Natural killer cell (primary cell): ENCODE measurements at regions of chr5 and their contacts with region 1.

Region 1: DNA sequence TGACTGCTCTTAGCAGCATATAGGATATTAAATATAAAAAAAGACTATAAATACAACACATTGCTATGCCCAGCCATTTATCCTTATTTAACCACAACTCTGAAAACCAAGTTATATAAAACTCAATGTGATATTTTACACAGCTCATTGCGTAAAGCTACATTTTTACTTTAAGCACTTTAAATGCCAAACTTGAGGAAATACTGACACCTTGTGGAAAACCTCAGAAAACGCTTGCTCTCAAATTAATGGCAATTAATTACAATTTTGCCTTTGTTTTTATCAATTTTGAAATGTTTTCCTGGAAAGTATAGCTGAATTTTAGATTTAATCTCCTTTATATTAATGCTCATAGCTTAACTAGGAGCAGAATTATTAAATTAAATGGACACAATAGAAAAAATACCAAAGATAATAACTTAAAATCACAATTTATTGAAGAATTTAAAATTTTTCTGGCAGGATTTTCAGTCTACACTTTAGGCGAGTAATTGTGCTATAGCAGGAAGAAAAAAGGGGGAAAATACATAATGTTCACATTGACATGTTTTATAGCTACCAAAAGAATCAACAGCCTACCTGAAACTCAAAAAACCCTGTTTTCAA is 25.2 kb upstream of the PLAC8L1 start:
- DNase-seq: peak in 1 of 2 donors; percentile 40
- ATAC-seq: no peak
- H3K4me3 ChIP-seq: no peak overlapping the region
- H3K4me3 Mint-ChIP-seq: no peak overlapping the region
- H3K27ac ChIP-seq: no peak overlapping the region
- H3K27ac Mint-ChIP-seq: no peak overlapping the region
- H3K4me1 ChIP-seq: no peaks in the 10 kb centered on the region
- H3K4me1 Mint-ChIP-seq: no peaks in the 10 kb centered on the region
- H3K27me3 ChIP-seq: no peaks in the 10 kb centered on the region
- H3K27me3 Mint-ChIP-seq: no peaks in the 10 kb centered on the region
- CTCF ChIP-seq: peak; percentile 18

Region 2: DNA sequence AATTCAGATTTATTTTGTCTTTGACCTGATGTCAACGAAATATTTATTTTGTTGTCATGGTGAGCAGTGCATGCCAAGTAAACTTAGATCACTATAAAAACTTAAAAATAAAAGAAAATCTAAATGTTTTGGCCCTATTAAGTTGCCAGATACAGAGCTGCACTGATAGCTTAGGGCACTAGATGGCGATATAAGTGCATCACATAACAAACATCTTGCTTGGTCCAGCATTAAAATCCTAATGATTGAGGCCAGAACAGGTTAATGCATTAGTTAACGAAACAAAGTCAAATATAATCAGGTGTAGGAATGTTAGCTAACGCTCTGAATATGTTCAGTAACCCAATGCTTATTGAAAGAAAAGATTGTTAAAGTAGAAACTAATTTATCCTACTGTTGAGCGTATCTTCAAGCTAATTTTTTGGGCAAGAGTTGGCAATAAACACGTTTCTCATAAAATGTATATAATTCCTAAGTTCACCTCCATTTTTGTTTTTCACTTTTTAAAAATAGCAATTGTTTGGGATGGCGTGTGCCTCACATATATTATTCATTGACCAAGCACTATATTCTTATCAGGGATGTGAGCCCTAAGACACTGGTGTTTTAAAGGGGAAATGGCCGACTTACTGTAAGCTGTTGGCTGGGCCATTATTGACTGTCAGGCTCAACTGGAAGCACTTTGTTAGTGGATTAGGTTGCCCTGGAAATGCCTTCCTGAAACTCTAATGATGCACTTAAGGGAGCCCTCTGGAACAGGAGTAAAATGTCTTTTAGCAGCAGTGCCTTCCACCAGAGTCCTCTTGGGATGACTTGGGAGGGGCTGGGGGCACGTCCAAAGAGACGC is 1926.6 kb before region 1 on chr5:
- intact Hi-C with region 1: loop called (anchors 2 kb)
- DNase-seq: peak in 1 of 2 donors; percentile 76
- ATAC-seq: peak; percentile 67 to 79 (median 74)
- H3K4me3 ChIP-seq: no peak overlapping the region
- H3K4me3 Mint-ChIP-seq: no peak overlapping the region
- H3K27ac ChIP-seq: no peak overlapping the region
- H3K27ac Mint-ChIP-seq: no peak overlapping the region
- H3K4me1 ChIP-seq: no peaks in the 10 kb centered on the region
- H3K4me1 Mint-ChIP-seq: no peaks in the 10 kb centered on the region
- H3K27me3 ChIP-seq: peaks cover 21% of the 10 kb centered on the region
- H3K27me3 Mint-ChIP-seq: peaks cover 39 to 74% of the 10 kb centered on the region in 2 donors
- CTCF ChIP-seq: peak; percentile 91

Region 3: DNA sequence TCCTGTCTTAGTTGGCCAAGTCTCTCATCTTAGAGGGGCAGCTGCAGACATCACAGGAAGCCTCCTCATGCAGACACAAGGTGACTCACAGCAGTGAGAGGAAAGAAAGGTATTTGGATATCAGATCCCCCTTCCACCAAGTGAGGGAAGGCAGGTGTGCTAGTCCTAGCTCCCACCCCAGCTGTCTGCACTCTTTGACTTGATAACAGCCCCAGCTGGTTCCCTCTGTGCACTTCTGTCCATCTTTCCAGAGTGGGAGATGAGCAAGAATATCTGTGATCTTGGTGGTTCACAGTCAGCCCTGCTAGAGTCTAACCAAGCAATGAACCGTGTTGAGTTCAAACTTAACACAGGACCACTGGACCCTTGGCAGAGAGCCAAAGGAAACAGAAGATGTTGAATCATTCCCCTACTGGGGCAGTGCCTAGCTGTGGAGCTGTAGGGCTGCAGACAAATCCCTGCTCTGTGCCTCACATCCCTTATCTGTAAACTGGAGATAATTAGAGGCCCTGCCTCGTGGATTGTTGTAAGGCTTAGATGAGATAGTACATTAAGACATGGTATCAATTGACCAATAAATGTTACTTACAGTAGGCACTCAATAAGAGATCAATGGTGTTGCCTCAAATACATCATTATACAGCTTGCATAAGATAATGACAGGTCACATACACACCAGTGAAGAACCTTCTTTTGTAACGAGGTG is 155.0 kb before region 1 on chr5:
- intact Hi-C with region 1: no loop called
- DNase-seq: no peak
- ATAC-seq: no peak
- H3K4me3 ChIP-seq: no peak overlapping the region
- H3K4me3 Mint-ChIP-seq: no peak overlapping the region
- H3K27ac ChIP-seq: no peak overlapping the region
- H3K27ac Mint-ChIP-seq: no peak overlapping the region
- H3K4me1 ChIP-seq: no peaks in the 10 kb centered on the region
- H3K4me1 Mint-ChIP-seq: no peaks in the 10 kb centered on the region
- H3K27me3 ChIP-seq: no peaks in the 10 kb centered on the region
- H3K27me3 Mint-ChIP-seq: no peaks in the 10 kb centered on the region
- CTCF ChIP-seq: no peak

Region 4: DNA sequence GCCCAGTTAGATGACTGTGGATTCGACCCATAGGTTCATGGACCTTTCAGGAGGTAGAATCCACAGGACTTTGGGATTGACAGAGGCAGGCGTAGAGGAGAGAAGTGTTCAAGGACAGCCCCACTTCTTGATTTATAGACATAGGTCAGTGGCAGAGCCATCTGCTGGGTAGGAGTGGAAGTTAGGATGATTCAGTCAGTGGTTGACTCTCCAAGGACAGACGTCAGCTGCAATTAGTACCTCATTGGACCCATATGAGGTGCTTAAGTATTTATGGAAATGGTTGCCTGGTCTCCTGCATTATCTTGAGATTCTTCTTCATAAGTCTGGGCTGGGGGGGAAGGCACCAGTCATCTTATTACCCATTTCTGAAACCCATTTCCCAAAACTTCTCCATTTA is 123.3 kb before region 1 on chr5:
- intact Hi-C with region 1: no loop called
- DNase-seq: no peak
- ATAC-seq: no peak
- H3K4me3 ChIP-seq: no peak overlapping the region
- H3K4me3 Mint-ChIP-seq: no peak overlapping the region
- H3K27ac ChIP-seq: no peak overlapping the region
- H3K27ac Mint-ChIP-seq: no peak overlapping the region
- H3K4me1 ChIP-seq: no peaks in the 10 kb centered on the region
- H3K4me1 Mint-ChIP-seq: no peaks in the 10 kb centered on the region
- H3K27me3 ChIP-seq: no peaks in the 10 kb centered on the region
- H3K27me3 Mint-ChIP-seq: peaks cover 0 to 6% of the 10 kb centered on the region in 2 donors
- CTCF ChIP-seq: no peak